Activated T-helper 1 cell treated with anti-CD3 and anti-CD28 coated beads, Interleukin-12 subunit alpha, Interleukin-12 subunit beta, Interleukin-2, Interleukin-4 antibody, amounts not matched to agents 30 ng/mL and 10 ng/mL and 1 ng/mL, durations not matched to agents 14 hours and 24 hours and 36 hours (primary cell): ENCODE measurements at regions of chr19 and their contacts with region 1.

Region 1: GRCh38 chr19:15449620-15450527 is at the start of gene WIZ:
- DNase-seq: peak; percentile 74
- H3K4me3 Mint-ChIP-seq: peak within 1 kb of the TSS; percentile 86
- H3K27ac Mint-ChIP-seq: peak within 1 kb of the TSS; percentile 98
- H3K4me1 Mint-ChIP-seq: peaks cover 32% of the 10 kb centered on the region
- H3K27me3 Mint-ChIP-seq: peaks cover 3% of the 10 kb centered on the region
- total RNA-seq, gene WIZ: 37.6 and 38.7 TPM in 2 replicates

Region 2: GRCh38 chr19:15129856-15130597 is 319.8 kb before region 1 on chr19:
- intact Hi-C with region 1: no loop called
- DNase-seq: no peak
- H3K4me3 Mint-ChIP-seq: peak overlapping the region; percentile 47
- H3K27ac Mint-ChIP-seq: peak overlapping the region; percentile 91
- H3K4me1 Mint-ChIP-seq: peaks cover 29% of the 10 kb centered on the region
- H3K27me3 Mint-ChIP-seq: peaks cover 2% of the 10 kb centered on the region

Region 3: DNA sequence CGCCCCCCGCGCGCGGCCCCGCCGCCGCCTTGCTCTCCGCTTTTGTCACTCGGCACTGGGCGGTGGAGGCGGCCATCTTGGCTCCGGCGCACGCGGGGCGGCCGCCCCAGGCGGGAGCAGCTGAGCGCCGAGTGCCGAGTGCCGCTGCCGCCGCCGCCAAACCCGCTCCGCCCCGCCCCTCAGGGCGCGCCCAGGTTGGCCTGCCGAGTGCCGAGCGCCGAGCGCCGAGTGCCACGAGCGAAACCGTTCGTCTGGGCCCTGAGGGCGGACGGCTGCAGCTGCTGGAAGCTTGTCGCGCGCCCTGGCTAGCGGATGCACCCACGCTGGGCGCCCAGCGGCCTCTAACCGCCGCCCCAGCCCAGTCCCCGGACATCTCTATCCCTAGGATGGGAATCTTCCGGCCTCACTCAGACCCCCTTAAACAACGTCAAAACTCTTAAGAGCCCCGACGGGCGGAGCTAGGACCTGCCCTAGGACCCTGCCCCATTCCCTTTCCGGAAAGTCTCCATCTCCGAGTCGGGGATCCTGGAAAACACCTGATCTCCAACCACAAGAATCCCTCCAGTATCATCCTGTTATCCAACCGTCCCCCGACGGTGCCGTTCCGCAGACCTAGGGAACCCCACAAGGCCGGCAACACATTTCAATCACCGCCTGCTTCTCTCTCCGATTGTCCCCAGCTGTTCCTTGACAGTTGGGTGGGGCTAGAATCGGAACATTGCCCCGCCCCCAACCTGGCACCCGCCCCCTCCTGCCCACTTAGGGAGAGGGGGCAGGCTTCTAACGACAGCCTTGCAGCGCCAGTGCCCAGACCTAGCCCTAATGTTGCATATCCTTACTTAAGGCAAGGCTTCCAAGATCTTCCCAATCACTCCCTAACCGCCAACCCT is 17.0 kb before region 1 on chr19:
- intact Hi-C with region 1: loop called (anchors 1 kb)
- DNase-seq: peak; percentile 94
- H3K4me3 Mint-ChIP-seq: peak overlapping the region; percentile 91
- H3K27ac Mint-ChIP-seq: peak overlapping the region; percentile 88
- H3K4me1 Mint-ChIP-seq: peaks cover 31% of the 10 kb centered on the region
- H3K27me3 Mint-ChIP-seq: no peaks in the 10 kb centered on the region